CD8-positive, alpha-beta T cell (primary cell): ENCODE measurements at regions of chr6 and their contacts with region 1.

Region 1: GRCh38 chr6:157597446-157598312 is 216.7 kb downstream of the ZDHHC14 start:
- DNase-seq: peak in 6 of 9 experiments; percentile 4 to 68 (median 43)
- ATAC-seq: no peak
- H3K4me3 ChIP-seq: no peak overlapping the region
- H3K4me3 Mint-ChIP-seq: no peak overlapping the region
- H3K27ac ChIP-seq: no peak overlapping the region
- H3K27ac Mint-ChIP-seq: no peak overlapping the region
- H3K4me1 ChIP-seq: no peaks in the 10 kb centered on the region
- H3K4me1 Mint-ChIP-seq: peaks cover 9% of the 10 kb centered on the region
- H3K27me3 ChIP-seq: no peaks in the 10 kb centered on the region
- H3K27me3 Mint-ChIP-seq: no peaks in the 10 kb centered on the region
- CTCF ChIP-seq: no peak

Region 2: GRCh38 chr6:157358287-157358686 is 239.4 kb before region 1 on chr6:
- CTCF ChIA-PET with region 1: no interaction called
- POLR2A ChIA-PET with region 1: no interaction called
- intact Hi-C with region 1: no loop called
- DNase-seq: no peak
- ATAC-seq: no peak
- H3K4me3 ChIP-seq: no peak overlapping the region
- H3K4me3 Mint-ChIP-seq: no peak overlapping the region
- H3K27ac ChIP-seq: no peak overlapping the region
- H3K27ac Mint-ChIP-seq: no peak overlapping the region
- H3K4me1 ChIP-seq: no peaks in the 10 kb centered on the region
- H3K4me1 Mint-ChIP-seq: no peaks in the 10 kb centered on the region
- H3K27me3 ChIP-seq: peaks cover 0 to 3% of the 10 kb centered on the region in 2 experiments
- H3K27me3 Mint-ChIP-seq: peaks cover 33% of the 10 kb centered on the region
- CTCF ChIP-seq: no peak

Region 3: DNA sequence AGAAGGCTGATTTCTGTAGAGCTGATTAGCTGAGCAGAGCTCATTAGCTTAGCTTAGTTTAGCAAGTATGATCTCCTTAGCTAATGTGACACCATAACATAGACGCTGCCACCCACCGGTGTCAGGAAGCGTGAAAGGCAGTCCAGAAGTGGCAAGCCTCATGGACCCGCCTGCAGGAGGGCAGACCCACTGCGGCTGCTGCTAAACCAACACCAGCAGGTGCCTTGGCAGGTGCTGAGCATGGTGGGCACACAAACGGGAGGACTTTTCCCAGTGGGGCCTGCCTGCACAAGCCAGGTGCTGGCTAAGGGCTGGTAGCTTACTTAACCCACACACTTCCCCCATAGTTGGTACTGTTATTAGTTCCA is 194.0 kb before region 1 on chr6:
- CTCF ChIA-PET with region 1: no interaction called
- POLR2A ChIA-PET with region 1: no interaction called
- intact Hi-C with region 1: loop called in 1 of 2 experiments (anchors 5 kb)
- DNase-seq: no peak
- ATAC-seq: no peak
- H3K4me3 ChIP-seq: no peak overlapping the region
- H3K4me3 Mint-ChIP-seq: no peak overlapping the region
- H3K27ac ChIP-seq: no peak overlapping the region
- H3K27ac Mint-ChIP-seq: no peak overlapping the region
- H3K4me1 ChIP-seq: no peaks in the 10 kb centered on the region
- H3K4me1 Mint-ChIP-seq: no peaks in the 10 kb centered on the region
- H3K27me3 ChIP-seq: no peaks in the 10 kb centered on the region
- H3K27me3 Mint-ChIP-seq: no peaks in the 10 kb centered on the region
- CTCF ChIP-seq: no peak

Region 4: DNA sequence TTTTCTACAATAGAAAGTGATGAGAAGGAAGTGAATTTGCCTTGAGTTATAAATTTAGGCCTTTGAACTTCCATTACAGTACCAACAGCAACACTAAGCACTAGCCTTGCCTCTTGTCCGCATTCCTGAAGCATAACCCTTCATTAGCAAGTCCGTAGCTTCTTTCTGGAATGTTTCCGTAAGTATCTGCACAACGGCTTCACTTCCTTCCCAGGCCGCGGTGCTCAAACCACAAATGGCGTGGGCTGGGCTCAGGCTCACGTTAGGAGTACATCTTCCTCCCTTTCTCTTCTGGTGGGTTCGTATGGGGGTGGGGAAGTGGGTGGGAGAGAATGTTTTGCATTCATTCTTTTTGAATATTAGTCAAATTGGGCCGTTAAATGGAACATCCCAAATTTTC is 31.5 kb after region 1 on chr6:
- CTCF ChIA-PET with region 1: no interaction called
- POLR2A ChIA-PET with region 1: no interaction called
- intact Hi-C with region 1: no loop called
- DNase-seq: no peak
- ATAC-seq: no peak
- H3K4me3 ChIP-seq: no peak overlapping the region
- H3K4me3 Mint-ChIP-seq: no peak overlapping the region
- H3K27ac ChIP-seq: no peak overlapping the region
- H3K27ac Mint-ChIP-seq: no peak overlapping the region
- H3K4me1 ChIP-seq: peaks cover 7% of the 10 kb centered on the region
- H3K4me1 Mint-ChIP-seq: peaks cover 12% of the 10 kb centered on the region
- H3K27me3 ChIP-seq: no peaks in the 10 kb centered on the region
- H3K27me3 Mint-ChIP-seq: no peaks in the 10 kb centered on the region
- CTCF ChIP-seq: no peak

Region 5: DNA sequence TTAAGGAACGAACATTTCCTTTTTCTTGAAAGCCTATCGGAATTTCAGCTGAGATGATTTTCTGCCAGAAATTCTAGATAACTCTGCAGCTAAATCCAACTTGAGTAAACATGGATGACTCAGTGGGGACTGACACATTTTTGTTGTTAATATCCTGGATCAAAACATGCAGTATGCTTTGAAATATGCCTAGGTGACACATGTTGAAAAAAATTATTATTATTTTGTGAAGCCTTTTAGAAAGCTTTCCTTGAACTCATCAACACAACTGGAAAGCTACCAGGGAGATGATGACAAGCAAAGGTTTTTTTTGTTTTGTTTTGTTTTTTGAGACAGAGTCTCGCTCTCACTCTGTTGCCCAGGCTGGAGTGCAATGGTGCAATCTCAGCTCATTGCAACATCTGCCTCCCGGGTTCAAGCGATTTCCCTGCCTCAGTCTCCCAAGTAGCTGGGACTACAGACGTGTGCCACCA is 85.3 kb after region 1 on chr6:
- CTCF ChIA-PET with region 1: no interaction called
- POLR2A ChIA-PET with region 1: no interaction called
- intact Hi-C with region 1: no loop called
- DNase-seq: no peak
- ATAC-seq: no peak
- H3K4me3 ChIP-seq: no peak overlapping the region
- H3K4me3 Mint-ChIP-seq: no peak overlapping the region
- H3K27ac ChIP-seq: no peak overlapping the region
- H3K27ac Mint-ChIP-seq: no peak overlapping the region
- H3K4me1 ChIP-seq: no peaks in the 10 kb centered on the region
- H3K4me1 Mint-ChIP-seq: no peaks in the 10 kb centered on the region
- H3K27me3 ChIP-seq: no peaks in the 10 kb centered on the region
- H3K27me3 Mint-ChIP-seq: no peaks in the 10 kb centered on the region
- CTCF ChIP-seq: no peak